ENCODE measurements at regions of chr6 and their contacts with region 1.

Region 1: DNA sequence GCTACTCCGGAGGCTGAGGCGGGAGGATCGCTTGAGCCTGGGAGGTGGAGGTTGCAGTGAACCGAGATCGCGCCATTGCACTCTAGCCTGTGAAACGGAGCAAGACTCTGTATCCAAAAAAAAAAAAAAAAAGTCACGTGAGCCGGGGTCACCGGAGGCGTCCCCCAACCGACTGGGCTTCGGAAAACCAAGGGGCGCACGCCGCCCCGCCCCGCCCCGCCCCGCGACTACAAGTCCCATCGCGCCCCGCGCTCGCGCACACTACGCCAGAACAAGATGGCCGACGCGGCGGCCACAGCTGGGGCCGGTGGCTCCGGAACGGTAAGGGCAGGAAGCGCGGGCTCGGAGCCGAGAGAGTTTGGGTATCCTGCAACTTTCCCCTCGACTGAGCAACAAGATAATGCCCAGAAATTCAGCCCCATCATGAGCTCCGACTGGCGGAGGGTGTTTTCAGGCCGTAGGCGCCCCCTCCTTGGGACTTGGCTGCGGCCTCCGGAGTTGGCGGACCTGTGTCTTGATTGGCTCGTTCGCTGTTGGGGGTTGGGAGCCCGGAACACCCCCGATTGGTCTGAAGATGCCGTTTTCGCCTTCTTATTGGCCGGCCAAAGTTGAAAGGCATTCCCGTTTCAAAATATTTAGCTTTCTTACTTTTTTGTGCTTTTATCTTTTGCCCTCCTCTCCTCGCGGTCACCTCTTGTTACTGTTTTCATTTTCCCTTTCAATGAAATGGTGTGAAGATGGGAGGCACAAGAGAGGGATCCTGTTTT is at the start of gene TAF8:
- DNase-seq: peak; percentile 96
- ATAC-seq: peak; percentile 82
- H3K4me3 Mint-ChIP-seq: peak within 1 kb of the TSS; percentile 94
- H3K27ac Mint-ChIP-seq: peak within 1 kb of the TSS; percentile 98
- H3K4me1 Mint-ChIP-seq: peaks cover 68% of the 10 kb centered on the region
- H3K27me3 Mint-ChIP-seq: no peaks in the 10 kb centered on the region
- total RNA-seq, gene TAF8: 50.9 to 53.2 TPM

Region 2: GRCh38 chr6:41941280-41942066 is 109.0 kb before region 1 on chr6 and contains the start of gene CCND3:
- CTCF ChIA-PET with region 1: interaction called, 420 read pairs
- DNase-seq: peak; percentile 95
- ATAC-seq: peak; percentile 84
- H3K4me3 Mint-ChIP-seq: peak within 1 kb of the TSS; percentile 99
- H3K27ac Mint-ChIP-seq: peak within 1 kb of the TSS; percentile 89
- H3K4me1 Mint-ChIP-seq: peaks cover 55% of the 10 kb centered on the region
- H3K27me3 Mint-ChIP-seq: no peaks in the 10 kb centered on the region
- total RNA-seq, gene CCND3: 333 to 502 TPM

Region 3: GRCh38 chr6:42038811-42039408 is 11.5 kb before region 1 on chr6:
- CTCF ChIA-PET with region 1: interaction called, 10 read pairs
- DNase-seq: no peak
- ATAC-seq: no peak
- H3K4me3 Mint-ChIP-seq: peak overlapping the region; percentile 70
- H3K27ac Mint-ChIP-seq: peak overlapping the region; percentile 95
- H3K4me1 Mint-ChIP-seq: peaks cover 76% of the 10 kb centered on the region
- H3K27me3 Mint-ChIP-seq: no peaks in the 10 kb centered on the region

Region 4: GRCh38 chr6:42075159-42075838 is 24.9 kb after region 1 on chr6:
- CTCF ChIA-PET with region 1: no interaction called
- DNase-seq: peak; percentile 72
- ATAC-seq: no peak
- H3K4me3 Mint-ChIP-seq: no peak overlapping the region
- H3K27ac Mint-ChIP-seq: no peak overlapping the region
- H3K4me1 Mint-ChIP-seq: peaks cover 3% of the 10 kb centered on the region
- H3K27me3 Mint-ChIP-seq: no peaks in the 10 kb centered on the region

Measured in activated CD8-positive, alpha-beta memory T cell treated with anti-CD3 and anti-CD28 coated beads, Interleukin-2, amount 10 ng/mL, durations not matched to agents 7 days and 5 days (primary cell).